GM10248 (cell line): ENCODE measurements at regions of chr1 and their contacts with region 1.

Region 1: DNA sequence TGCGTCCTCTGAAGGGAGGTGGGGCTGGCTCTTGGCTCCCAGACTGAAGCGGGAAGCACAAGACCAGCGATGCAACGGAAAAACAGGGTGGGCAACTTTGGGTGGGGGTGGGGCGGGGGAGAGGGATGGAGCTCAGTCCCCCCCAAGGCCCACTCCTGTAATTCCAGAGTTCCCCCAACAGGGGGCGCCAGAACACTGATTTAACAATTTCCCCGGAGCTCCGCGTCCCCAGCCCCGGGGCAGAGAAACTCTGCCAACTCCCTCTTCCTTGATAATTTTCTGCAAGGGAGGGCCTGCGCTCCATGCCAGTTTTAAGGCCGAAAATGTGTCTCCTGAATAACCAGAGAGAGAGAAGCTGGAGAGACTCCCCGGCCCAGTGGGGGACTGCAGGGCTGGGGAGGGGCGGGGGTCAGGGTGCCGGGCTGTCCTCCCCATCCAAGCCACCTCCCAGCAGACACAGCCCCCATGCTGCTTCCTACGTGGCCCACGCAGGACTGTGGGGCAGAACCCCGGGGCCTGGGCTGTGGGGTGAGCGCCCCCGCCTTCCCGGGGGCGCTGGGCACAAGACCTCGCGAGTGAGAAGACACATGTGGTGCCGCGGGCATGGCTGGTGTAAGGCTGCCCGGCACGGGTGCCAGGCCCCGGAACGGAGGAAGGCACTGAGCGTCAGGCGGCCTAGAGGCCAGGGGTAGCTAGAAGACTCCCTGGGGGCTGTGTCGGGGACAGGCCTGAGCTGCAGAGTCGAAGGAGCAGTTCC is 51.4 kb downstream of the KIF21B start:
- DNase-seq: peak; percentile 75
- CTCF ChIP-seq: peak; percentile 59

Region 2: DNA sequence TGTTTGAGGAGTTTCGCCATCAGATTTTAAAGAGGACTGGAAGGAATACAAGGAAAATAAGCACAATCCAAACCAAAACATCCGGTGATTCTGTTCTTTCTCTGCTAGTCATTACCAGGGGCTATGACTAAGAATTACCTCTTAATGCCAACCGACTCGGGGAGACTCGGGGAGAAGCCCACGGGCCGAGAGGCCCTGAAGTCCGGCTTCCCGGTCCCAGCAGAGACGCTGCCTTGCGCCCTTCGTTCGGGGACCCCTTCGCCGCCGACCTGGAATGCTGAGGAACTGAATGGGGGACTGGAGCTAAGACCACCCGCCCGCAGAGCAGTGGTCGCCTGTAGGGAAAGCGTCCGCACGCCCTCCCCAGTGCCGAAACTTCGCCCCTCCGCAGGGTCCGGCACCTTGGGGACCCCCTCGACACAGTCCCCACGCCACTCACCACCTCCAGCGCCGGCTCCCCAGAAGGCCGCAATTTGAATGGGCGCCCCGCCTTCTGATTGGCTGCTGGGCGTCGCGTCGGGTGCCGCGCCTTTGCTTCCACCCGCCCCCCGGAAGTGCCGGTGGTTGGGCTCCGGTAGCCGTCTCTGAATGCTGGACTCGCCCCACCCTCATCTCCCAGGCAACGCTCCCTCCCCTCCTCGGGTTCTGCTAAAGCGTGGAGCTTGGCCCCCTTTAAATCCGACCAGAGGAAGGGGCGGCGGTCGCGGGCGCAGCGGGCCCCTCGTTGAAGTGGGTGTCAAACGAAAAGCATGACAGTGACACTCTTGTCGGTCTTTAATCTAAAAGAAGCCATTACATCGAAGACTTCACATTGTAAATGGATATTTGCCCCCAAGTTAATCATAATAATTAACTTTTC is 351.6 kb before region 1 on chr1 and contains the start of gene KIF14:
- CTCF ChIA-PET with region 1: interaction called, 33 read pairs
- POLR2A ChIA-PET with region 1: no interaction called
- DNase-seq: peak; percentile 97
- CTCF ChIP-seq: no peak

Region 3: GRCh38 chr1:200890818-200891773 is 81.0 kb before region 1 on chr1:
- CTCF ChIA-PET with region 1: interaction called, 21 read pairs
- POLR2A ChIA-PET with region 1: no interaction called
- DNase-seq: no peak
- CTCF ChIP-seq: peak; percentile 72

Region 4: GRCh38 chr1:200951016-200951415 is 21.1 kb before region 1 on chr1:
- CTCF ChIA-PET with region 1: interaction called, 13 read pairs
- POLR2A ChIA-PET with region 1: no interaction called
- DNase-seq: no peak
- CTCF ChIP-seq: no peak

Region 5: DNA sequence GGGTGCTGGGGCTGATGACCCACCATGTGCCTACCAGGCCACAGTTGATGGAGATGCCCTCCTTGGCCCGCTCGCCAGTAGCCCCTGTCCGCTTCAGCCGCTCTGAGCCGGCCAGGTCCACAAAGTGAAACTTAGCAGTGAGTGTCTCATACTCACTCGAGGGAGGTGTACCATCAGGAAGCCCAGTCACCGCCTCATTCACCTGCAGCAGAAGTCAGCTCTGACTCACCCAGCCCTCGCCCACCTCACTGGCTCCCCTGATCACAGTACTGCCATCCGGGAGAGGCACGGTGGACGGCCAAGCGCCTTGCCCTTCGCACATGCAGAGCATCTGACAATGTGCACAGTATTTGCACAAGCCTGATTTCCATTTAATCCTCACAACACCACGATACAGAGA is 32.6 kb after region 1 on chr1:
- CTCF ChIA-PET with region 1: interaction called, 17 read pairs
- POLR2A ChIA-PET with region 1: no interaction called
- DNase-seq: no peak
- CTCF ChIP-seq: no peak

Region 6: DNA sequence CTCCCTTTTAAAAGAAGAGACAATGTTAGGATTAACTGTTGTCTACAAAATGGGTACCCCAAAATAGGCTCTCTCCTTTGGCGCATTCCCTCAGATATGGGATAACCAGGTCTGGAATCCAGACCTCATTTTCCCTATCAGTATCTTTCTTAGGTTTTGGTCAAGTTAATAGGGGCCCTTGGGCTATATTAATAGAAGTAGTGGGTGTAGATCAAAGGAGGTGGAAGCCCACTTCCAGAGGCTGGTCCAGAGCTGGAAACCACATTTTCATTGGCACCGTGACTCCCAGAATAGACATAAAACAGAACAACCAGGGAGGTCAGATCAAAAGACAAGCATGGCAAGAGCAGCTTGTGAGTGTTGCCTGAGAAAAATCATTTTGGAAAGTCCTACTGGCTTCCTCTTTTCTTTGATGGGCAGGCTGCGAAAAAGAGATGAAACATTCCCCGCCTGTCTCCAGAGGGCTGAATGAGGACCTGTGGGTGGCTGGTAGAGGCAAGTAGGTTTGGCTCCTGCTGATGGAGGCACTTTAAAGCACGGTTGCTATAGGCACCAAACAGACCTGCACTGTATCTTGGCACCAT is 77.2 kb after region 1 on chr1:
- CTCF ChIA-PET with region 1: interaction called, 61 read pairs
- POLR2A ChIA-PET with region 1: no interaction called
- DNase-seq: no peak
- CTCF ChIP-seq: no peak